Posterior vena cava (tissue), 2 donors: ENCODE measurements at regions of chr16 and their contacts with region 1.

Region 1: DNA sequence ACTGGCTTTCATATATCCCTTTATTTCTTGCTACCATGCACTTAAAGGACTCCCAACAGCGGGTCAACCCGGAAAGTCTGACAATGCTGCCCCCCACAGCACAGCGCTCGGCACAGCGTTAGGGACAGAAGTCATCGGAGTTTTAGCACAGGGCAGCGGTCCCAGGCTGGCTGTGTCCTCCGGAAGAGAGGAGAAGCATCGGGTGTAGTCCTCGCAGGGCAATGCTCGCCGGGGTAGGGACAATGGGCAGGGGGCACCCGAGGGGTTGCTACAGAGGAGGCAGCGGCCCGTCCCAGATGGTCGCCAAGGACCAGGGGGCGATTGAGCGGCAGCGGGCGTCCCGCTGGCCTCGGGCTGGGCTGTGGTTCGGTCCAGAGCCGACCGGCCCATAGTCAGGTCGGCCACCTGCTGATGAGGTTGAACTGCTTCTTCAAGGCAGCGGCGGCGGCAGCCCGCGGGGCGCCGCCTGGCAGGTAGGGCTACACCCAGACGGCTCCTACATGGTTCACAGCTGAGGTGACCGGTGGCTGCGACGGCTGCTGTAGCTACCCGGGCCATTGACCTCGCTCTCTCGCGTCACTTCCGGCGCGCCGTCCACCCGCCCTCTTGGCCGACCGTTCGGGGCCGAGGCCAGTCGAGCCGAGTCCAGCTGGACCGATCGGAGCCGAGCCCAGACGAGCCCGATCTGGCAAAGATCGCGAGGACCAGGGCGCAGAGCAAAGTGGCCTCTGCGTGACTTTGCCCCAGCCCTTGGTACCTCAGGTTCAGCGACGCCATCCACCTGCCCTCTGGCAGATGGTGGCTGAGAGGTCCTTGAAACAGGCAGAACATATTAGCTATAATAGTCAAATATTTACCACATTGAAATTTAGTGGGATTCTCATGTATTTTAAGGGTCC is 4.7 kb upstream of the LCMT1 start:
- DNase-seq: peak; percentile 99

Region 2: DNA sequence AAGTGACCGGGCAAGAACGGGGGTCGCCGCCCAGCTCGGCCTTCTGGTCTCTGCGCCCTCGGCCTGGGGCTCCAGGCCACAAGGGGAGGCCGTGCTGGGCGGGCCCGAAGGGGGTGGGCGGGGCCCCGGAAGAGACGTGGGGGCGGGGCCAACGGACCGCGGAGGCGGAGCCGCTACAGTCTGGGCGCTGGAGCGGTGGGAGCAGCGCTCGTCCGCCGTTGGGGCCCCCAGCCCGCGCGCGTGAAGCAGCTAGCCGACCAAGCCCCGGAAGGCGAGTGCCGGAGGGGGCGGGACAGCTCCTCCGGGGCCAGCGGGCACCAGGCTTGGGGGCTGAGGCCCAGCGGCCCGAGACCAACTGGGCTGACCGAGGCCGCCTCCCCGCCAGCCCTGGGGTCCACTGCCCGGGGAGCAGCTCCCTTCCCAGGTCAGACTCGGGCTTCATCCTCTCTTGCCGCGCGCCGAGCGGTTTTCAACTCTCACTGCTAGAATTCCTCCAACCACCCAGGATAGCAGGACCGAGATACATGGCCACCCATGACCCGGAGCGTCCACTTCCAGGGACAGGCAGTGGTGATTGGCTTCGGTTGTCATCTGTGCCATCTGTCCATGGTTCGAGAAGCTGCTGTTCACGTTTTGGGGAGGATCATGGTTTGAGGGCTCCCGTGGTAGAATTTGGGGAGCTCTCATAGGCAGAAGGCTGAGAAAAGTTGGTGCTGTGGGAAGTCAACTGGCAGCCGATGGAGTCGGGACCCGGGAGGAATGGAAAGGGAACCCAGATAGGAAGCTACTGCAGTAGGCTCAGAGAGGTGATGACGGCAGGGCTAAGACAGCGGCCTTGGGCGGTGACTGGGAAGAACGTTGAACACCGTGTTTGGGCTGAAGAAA is 39.8 kb before region 1 on chr16:
- intact Hi-C with region 1: loop called in 1 of 2 experiments (anchors 1 kb)
- DNase-seq: peak; percentile 95

Region 3: DNA sequence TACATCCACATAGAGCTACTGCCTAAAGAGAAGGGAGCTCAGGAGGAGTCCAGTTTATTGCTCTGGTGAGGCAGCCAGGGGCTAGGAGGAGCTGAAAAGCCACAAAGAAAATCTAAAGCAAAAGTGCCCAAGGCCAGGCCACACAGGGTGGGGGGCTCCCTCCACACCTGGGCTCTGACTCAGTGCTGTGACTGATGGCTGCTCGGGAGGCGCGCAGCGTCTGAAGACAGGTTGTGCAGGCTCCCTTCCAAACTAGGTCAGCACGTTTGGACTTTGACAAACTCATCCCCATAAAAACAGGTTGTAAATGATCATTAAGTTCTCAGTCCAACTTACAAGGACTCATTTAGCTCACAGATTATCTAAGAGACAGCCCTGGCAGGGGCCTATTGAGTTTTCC is 17.5 kb before region 1 on chr16:
- intact Hi-C with region 1: no loop called
- DNase-seq: no peak

Region 4: GRCh38 chr16:25135254-25135878 is 28.6 kb after region 1 on chr16:
- intact Hi-C with region 1: no loop called
- DNase-seq: no peak

Region 5: DNA sequence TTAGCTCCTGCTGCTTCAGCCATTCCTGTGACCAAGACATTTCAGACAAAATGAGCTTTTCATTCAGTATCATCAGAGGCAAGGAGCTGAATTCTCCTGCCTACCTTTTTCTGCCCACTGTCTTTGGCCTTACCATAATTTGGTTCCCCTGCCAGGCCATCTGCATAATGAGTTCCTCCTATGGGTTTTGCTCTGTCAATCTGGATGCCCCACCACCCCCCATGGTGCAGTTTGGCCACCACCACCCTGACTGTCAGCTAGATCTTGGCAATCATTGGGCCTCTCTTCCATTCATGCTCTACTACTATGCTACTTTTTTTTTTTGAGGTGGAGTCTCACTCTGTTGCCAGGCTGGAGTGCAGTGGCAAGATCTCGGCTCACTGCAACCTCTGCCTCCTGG is 320.0 kb after region 1 on chr16:
- intact Hi-C with region 1: no loop called
- DNase-seq: no peak